GM10248 (cell line): ENCODE measurements at regions of chr4 and their contacts with region 1.

Region 1: DNA sequence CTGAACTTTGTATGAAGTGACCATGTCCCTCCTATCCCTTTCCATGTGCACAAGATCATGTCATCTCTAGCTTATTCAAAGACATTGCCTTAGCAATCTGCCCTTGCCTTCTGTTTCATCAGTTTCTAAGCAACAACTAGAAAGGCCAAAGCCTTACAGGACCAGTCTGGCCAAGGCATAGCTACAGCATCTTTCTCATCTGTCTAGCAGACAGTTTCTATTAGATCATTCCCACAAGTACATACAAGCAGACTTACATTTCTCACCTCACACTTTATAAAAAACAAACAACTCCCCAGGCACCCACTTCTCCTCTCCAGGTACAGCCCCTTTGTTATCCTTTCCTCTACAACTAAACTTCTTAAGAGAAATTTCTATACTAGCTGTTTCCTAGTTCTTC is 188.7 kb upstream of the AADAT start:
- DNase-seq: no peak
- CTCF ChIP-seq: no peak

Region 2: GRCh38 chr4:170047771-170048354 is 230.6 kb before region 1 on chr4:
- CTCF ChIA-PET with region 1: no interaction called
- POLR2A ChIA-PET with region 1: no interaction called
- DNase-seq: peak; percentile 38
- CTCF ChIP-seq: peak; percentile 66

Region 3: DNA sequence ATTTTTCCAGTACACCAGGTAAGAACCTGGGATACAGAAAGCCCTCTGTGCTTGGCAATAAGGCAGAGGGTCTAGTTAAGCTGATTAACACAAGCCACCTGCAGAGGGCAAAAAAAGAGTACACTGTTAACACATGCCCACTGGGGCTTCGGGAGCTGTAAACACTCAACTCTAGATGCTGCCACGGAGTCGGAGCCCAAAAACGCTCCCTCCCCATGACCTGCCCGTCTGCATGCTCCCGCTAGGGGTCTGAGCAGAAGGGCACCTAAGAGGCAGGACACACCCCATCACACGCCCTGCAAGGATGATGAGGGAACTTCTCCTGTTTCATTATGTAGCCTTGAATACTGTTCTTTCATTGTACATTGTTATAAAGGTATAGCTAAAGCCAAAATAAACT is 526.9 kb after region 1 on chr4:
- CTCF ChIA-PET with region 1: no interaction called
- POLR2A ChIA-PET with region 1: interaction called, 10 read pairs
- DNase-seq: no peak
- CTCF ChIP-seq: no peak